Ovary (tissue), 10 donors: ENCODE measurements at regions of chr2 and their contacts with region 1.

Region 1: DNA sequence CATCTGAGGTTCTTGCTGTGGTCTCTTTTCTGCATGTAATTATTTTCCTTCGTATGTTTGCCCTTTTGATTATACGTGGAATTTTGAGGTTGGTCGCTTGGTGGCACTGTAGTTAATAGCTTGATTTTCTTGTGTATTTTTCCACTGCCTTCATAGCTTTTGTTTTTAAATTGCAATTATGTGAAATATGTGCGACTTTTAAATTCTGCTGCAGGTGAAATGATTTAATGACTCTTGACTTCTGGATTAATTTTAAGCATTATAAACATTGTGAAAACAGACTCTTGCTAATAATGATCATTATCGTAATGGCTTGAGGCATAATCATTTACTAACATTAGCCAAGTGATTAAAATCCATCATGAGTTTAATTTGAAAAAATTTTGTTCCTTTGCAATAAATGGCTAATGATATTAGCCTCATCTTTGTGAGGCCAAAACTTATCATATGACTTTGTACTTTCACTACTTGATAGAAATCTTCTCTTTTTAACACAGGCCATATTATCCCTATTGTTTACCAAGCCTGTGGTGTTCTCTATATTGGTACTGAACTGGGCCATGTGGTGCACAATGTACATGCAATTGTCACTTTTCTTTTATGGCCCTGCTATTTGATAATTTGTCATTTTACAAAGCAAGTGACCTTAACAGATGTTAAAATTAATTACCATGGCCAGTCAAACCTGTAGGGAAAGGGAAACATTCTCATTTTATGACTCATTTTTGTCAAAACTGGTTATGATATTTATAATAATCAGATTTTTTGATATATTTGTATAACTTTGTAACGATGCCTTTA is 62.8 kb upstream of the NEUROD1 start:
- DNase-seq: peak in 1 of 5 donors; percentile 21
- H3K4me3 ChIP-seq: no peak overlapping the region
- H3K27ac ChIP-seq: no peak overlapping the region
- H3K4me1 ChIP-seq: no peaks in the 10 kb centered on the region
- H3K27me3 ChIP-seq: no peaks in the 10 kb centered on the region
- CTCF ChIP-seq: peak in 1 of 3 donors; percentile 32
- EP300 ChIP-seq: no peak
- POLR2A ChIP-seq: no peak

Region 2: GRCh38 chr2:181953881-181954537 is 210.9 kb after region 1 on chr2:
- intact Hi-C with region 1: loop called in 2 of 4 experiments (anchors 10 kb)
- DNase-seq: peak; percentile 16 to 51 (median 35)
- H3K4me3 ChIP-seq: no peak overlapping the region
- H3K27ac ChIP-seq: no peak overlapping the region
- H3K4me1 ChIP-seq: peaks cover 1% of the 10 kb centered on the region
- H3K27me3 ChIP-seq: no peaks in the 10 kb centered on the region
- CTCF ChIP-seq: peak in 2 of 3 donors; percentile 21 to 25
- EP300 ChIP-seq: no peak
- POLR2A ChIP-seq: no peak

Region 3: DNA sequence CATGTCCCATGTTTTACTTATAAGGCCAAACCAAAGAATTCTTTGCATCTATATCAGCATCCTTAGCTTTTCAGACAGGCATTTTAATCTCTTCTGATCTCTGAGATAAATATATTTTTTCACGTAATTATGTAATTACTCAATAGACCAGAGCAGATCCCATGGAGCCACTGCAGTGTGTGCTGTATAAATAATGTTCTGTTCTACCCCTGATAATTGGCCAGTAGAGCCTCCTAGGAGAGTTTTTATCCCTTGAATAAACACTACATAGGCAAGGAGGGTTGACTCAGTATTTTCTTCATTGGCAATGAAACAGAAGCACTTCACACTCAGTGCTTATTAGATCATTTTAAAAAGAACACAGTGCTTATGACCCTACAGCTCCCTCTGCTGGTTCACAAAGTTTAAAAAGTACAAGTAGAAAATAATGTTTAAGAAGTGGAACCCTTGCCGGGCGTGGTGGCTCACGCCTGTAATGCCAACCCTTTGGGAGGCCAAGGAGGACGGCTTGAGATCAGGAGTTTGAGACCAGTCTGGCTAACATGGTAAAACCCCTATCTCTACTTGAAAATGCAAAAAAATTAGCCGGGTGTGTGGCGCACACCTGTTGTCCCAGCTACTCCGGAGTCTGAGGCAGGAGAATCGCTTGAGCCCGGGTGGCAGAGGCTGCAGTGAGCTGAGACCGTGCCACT is 334.5 kb after region 1 on chr2:
- intact Hi-C with region 1: loop called in 3 of 4 experiments (anchors 5 kb)
- DNase-seq: peak in 2 of 5 donors; percentile 8 to 17
- H3K4me3 ChIP-seq: no peak overlapping the region
- H3K27ac ChIP-seq: no peak overlapping the region
- H3K4me1 ChIP-seq: no peaks in the 10 kb centered on the region
- H3K27me3 ChIP-seq: no peaks in the 10 kb centered on the region
- CTCF ChIP-seq: peak in 2 of 3 donors; percentile 32 to 59
- EP300 ChIP-seq: no peak
- POLR2A ChIP-seq: no peak